Activated CD8-positive, alpha-beta memory T cell treated with anti-CD3 and anti-CD28 coated beads, Interleukin-2, amount 10 ng/mL, durations not matched to agents 7 days and 5 days (primary cell): ENCODE measurements at regions of chr12 and their contacts with region 1.

Region 1: GRCh38 chr12:12376646-12377448 is 20.0 kb downstream of the BORCS5 start:
- DNase-seq: peak; percentile 51
- ATAC-seq: peak; percentile 56
- H3K4me3 Mint-ChIP-seq: no peak overlapping the region
- H3K27ac Mint-ChIP-seq: peak overlapping the region; percentile 21
- H3K4me1 Mint-ChIP-seq: peaks cover 50% of the 10 kb centered on the region
- H3K27me3 Mint-ChIP-seq: no peaks in the 10 kb centered on the region

Region 2: GRCh38 chr12:12272869-12273268 is 104.0 kb before region 1 on chr12:
- CTCF ChIA-PET with region 1: no interaction called
- DNase-seq: no peak
- ATAC-seq: no peak
- H3K4me3 Mint-ChIP-seq: no peak overlapping the region
- H3K27ac Mint-ChIP-seq: no peak overlapping the region
- H3K4me1 Mint-ChIP-seq: no peaks in the 10 kb centered on the region
- H3K27me3 Mint-ChIP-seq: peaks cover 20% of the 10 kb centered on the region

Region 3: GRCh38 chr12:12442548-12443071 is 65.8 kb after region 1 on chr12:
- CTCF ChIA-PET with region 1: interaction called, 10 read pairs
- DNase-seq: no peak
- ATAC-seq: no peak
- H3K4me3 Mint-ChIP-seq: peak overlapping the region; percentile 54
- H3K27ac Mint-ChIP-seq: peak overlapping the region; percentile 100
- H3K4me1 Mint-ChIP-seq: peaks cover 86% of the 10 kb centered on the region
- H3K27me3 Mint-ChIP-seq: no peaks in the 10 kb centered on the region

Region 4: DNA sequence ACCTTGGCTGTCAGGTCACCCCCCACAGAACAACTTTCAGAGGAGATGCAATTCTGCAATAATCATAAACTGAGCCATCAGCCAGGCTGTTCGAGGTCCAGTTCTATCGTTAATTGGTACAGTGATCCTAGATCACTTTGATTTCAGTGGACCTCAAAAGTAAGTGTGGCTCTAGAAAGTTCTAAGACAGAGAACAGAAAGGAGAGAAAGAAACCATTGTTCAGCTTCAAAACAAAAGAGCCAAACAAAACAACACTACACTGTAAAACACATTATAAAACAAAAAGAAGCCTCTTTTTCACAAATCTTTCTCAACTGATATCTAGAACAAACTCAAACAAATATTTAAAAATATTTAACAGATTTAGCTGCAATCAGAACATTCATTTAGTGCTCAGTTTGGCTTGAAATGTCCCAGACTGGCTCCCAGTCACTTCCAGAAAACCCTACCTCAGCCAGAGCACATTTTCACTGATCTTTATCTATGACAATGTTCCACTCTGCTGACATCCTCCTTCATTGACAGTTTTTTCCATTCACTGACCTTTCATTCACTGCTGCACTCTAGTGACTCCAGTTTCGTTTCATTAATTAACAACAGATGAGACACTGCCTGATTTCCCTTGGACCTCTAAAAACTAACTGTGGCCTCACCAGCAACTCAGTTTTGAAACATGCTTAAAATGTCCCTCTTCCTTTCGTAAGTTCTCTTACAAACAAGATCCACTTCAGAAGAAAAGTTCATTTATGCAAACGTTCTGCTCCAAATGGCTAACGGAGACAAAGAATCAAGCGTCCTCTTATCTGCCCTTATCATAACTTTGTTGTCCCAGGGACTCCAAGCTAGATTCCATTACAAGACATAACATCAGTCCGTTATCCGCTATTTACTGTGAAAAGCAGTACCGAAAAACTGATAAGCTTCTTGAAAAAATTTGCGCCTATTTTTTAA is 129.0 kb after region 1 on chr12:
- CTCF ChIA-PET with region 1: interaction called, 35 read pairs
- DNase-seq: no peak
- ATAC-seq: peak; percentile 75
- H3K4me3 Mint-ChIP-seq: peak overlapping the region; percentile 17
- H3K27ac Mint-ChIP-seq: peak overlapping the region; percentile 67
- H3K4me1 Mint-ChIP-seq: peaks cover 51% of the 10 kb centered on the region
- H3K27me3 Mint-ChIP-seq: no peaks in the 10 kb centered on the region

Region 5: DNA sequence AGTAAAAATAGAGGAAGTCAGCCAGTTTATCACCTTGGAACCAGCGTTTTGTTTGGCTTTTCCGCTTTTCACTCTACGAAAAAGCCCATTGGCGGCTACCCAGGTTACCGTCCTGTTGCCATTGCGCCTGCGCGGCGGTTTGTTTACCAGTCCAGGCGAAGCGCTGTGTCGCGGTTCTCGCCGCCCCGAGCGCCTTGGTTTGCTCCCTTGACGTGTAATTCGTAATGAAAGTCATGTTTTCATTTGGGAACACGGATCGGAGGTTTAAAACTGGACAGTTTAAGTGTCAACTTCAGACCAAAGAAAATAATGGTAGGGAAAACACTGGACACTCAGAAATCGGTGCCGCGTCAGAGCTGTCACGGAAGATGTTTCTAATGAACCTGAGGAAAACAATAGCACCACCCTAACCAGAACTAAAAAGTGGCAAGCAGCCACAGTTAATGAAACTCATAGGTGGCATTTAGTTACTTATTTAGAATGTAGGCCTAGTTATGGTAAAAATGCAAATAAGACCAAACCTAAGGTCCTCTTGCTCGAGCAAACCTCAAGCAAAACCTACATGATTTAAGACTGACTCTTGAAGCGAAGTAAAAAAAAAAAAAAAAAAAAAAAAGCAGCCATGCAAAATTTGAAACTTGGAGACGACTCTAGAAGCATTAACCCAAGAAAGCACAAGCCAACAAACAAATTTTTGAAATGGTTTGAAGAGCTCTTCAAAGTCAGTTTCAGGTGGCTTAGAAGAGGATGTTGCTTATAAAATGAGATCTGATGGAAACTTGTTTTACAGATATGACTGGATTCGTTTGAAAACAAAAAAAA is 319.9 kb after region 1 on chr12:
- CTCF ChIA-PET with region 1: interaction called, 19 read pairs
- DNase-seq: peak; percentile 96
- ATAC-seq: peak; percentile 84
- H3K4me3 Mint-ChIP-seq: peak overlapping the region; percentile 81
- H3K27ac Mint-ChIP-seq: peak overlapping the region; percentile 100
- H3K4me1 Mint-ChIP-seq: peaks cover 60% of the 10 kb centered on the region
- H3K27me3 Mint-ChIP-seq: no peaks in the 10 kb centered on the region